Activated CD4-positive, alpha-beta T cell treated with anti-CD3 and anti-CD28 coated beads, Interleukin-2, amount 10 ng/mL, durations not matched to agents 24 days and 14 days (primary cell): ENCODE measurements at regions of chr17 and their contacts with region 1.

Region 1: GRCh38 chr17:36486204-36487194 is at the start of gene ZNHIT3:
- DNase-seq: peak; percentile 98
- H3K4me3 Mint-ChIP-seq: peak within 1 kb of the TSS; percentile 98
- H3K27ac Mint-ChIP-seq: peak within 1 kb of the TSS; percentile 99
- H3K4me1 Mint-ChIP-seq: peaks cover 38% of the 10 kb centered on the region
- H3K27me3 Mint-ChIP-seq: peaks cover 12% of the 10 kb centered on the region
- total RNA-seq, gene ZNHIT3: 47.3 and 48.5 TPM in 2 replicates

Region 2: DNA sequence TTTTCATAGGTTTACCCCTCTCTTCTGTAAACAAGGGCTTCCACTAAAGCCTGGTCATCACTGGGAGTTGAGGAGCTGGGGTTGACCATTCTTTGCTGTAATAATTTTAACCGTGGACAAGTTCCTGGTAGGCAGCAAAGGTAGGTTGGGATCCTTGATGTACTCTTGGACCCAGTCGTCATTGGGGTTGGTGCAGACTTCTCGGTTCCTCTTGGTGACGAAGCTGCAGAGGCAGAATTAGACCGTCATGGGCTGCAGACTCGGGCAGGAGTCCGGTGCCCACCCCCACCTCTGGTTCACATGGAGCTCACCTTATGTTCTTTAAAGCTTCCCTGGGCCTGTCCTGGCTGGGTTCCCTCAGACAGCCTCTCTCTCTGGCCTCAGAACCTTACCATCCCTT is 509.0 kb before region 1 on chr17:
- intact Hi-C with region 1: loop called (anchors 5 kb)
- DNase-seq: no peak
- H3K4me3 Mint-ChIP-seq: no peak overlapping the region
- H3K27ac Mint-ChIP-seq: no peak overlapping the region
- H3K4me1 Mint-ChIP-seq: no peaks in the 10 kb centered on the region
- H3K27me3 Mint-ChIP-seq: peaks cover 10% of the 10 kb centered on the region

Region 3: GRCh38 chr17:36463916-36464315 is 22.6 kb before region 1 on chr17:
- intact Hi-C with region 1: loop called (anchors 1 kb)
- DNase-seq: peak; percentile 92
- H3K4me3 Mint-ChIP-seq: no peak overlapping the region
- H3K27ac Mint-ChIP-seq: no peak overlapping the region
- H3K4me1 Mint-ChIP-seq: no peaks in the 10 kb centered on the region
- H3K27me3 Mint-ChIP-seq: peaks cover 33% of the 10 kb centered on the region

Region 4: GRCh38 chr17:36534840-36535668 is 48.6 kb after region 1 on chr17 and contains the starts of genes MYO19 and PIGW:
- intact Hi-C with region 1: loop called (anchors 1 kb)
- DNase-seq: peak; percentile 97
- H3K4me3 Mint-ChIP-seq: peak within 1 kb of the TSS; percentile 99
- H3K27ac Mint-ChIP-seq: peak within 1 kb of the TSS; percentile 99
- H3K4me1 Mint-ChIP-seq: peaks cover 33% of the 10 kb centered on the region
- H3K27me3 Mint-ChIP-seq: no peaks in the 10 kb centered on the region
- total RNA-seq, gene MYO19: 167 and 172 TPM in 2 replicates
- total RNA-seq, gene PIGW: 30.4 and 30.5 TPM in 2 replicates